Calu3 (cell line): ENCODE measurements at regions of chr2 and their contacts with region 1.

Region 1: GRCh38 chr2:152925547-152926327 is 207.3 kb downstream of the ARL6IP6 start:
- DNase-seq: peak; percentile 80
- H3K4me3 Mint-ChIP-seq: no peak overlapping the region
- H3K27ac Mint-ChIP-seq: no peak overlapping the region
- H3K4me1 Mint-ChIP-seq: no peaks in the 10 kb centered on the region
- H3K27me3 Mint-ChIP-seq: peaks cover 24% of the 10 kb centered on the region
- CTCF ChIP-seq: peak; percentile 83

Region 2: DNA sequence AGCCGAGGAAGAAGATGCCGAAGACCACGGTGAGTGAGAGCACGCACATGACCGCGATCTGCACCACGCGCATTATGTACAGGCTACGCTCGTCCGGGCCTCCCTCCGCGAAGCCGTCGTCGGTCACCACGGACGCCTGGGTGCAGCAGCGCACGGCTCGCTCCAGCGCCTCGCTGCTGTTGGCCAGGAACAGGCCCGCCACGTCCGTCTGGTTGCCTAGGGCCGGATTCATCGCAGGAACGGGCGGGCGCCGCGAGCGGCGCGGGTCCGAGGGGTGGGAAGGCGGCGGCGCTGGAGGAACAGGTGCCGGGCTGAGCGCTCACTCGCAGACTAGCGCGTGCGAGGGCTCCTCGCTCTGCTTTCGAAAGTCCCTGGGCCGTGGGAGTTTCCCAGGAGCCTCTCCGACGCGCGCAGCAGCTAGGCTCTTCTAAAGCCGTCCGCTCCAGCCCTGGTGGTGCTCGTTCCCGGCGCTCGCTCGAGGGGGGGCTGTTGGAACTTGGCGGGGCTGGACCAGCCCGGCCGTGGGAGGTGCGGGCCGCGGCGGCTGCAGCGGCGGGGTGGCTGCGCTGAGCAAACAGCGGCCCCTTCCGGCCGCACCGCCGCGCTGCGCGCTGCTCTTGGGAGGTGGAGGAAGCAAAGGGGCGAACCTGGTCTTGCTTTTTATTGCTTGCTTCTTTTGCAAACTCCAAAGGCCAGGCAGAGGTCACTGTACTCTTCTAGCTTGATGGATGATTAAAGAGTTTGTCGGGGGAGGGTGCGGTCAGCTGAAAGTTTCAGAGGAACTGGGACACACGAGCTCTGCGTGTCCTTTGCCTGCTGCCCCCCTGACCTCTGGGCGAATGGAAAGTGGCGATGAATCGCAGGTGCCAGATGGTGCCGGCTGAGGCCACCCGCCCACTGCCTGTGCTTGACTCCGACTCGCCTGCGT is 552.9 kb after region 1 on chr2 and contains the start of gene RPRM:
- CTCF ChIA-PET with region 1: no interaction called
- intact Hi-C with region 1: loop called (anchors 5 kb)
- DNase-seq: peak; percentile 82
- H3K4me3 Mint-ChIP-seq: peak within 1 kb of the TSS; percentile 46
- H3K27ac Mint-ChIP-seq: peak within 1 kb of the TSS; percentile 3
- H3K4me1 Mint-ChIP-seq: peaks cover 8% of the 10 kb centered on the region
- H3K27me3 Mint-ChIP-seq: no peaks in the 10 kb centered on the region
- CTCF ChIP-seq: peak; percentile 93
- total RNA-seq, gene RPRM: 1.0 and 2.1 TPM in 2 replicates

Region 3: GRCh38 chr2:153519257-153519875 is 593.6 kb after region 1 on chr2:
- CTCF ChIA-PET with region 1: no interaction called
- intact Hi-C with region 1: loop called (anchors 1 kb)
- DNase-seq: peak; percentile 54
- H3K4me3 Mint-ChIP-seq: no peak overlapping the region
- H3K27ac Mint-ChIP-seq: no peak overlapping the region
- H3K4me1 Mint-ChIP-seq: no peaks in the 10 kb centered on the region
- H3K27me3 Mint-ChIP-seq: no peaks in the 10 kb centered on the region
- CTCF ChIP-seq: peak; percentile 62